ENCODE measurements at regions of chr12 and their contacts with region 1.

Region 1: GRCh38 chr12:116818948-116819832 is 62.1 kb downstream of the HRK start:
- DNase-seq: peak; percentile 92 to 95 (median 94)
- ATAC-seq: peak; percentile 94 to 98 (median 96)
- H3K4me3 ChIP-seq: peak overlapping the region; percentile 56 to 98 (median 76)
- H3K27ac ChIP-seq: peak overlapping the region; percentile 85 to 98 (median 92)
- H3K4me1 ChIP-seq: peaks cover 2 to 17% (median 11%) of the 10 kb centered on the region in 12 donors
- H3K27me3 ChIP-seq: no peaks in the 10 kb centered on the region
- CTCF ChIP-seq: peak in 2 of 12 donors; percentile 25 to 33
- POLR2A ChIP-seq: peak; percentile 18 to 78

Region 2: GRCh38 chr12:116737774-116738700 is 81.2 kb before region 1 on chr12 and contains the starts of genes RNFT2 and SPRING1:
- intact Hi-C with region 1: loop called in 5 of 10 experiments (anchors 1 to 5 kb)
- DNase-seq: peak; percentile 98 to 100 (median 99)
- ATAC-seq: peak; percentile 100
- H3K4me3 ChIP-seq: peak within 1 kb of the TSS; percentile 79 to 97 (median 88)
- H3K27ac ChIP-seq: peak within 1 kb of the TSS in 11 of 12 donors; percentile 54 to 87 (median 76)
- H3K4me1 ChIP-seq: peaks cover 3 to 18% (median 13%) of the 10 kb centered on the region in 12 donors
- H3K27me3 ChIP-seq: no peaks in the 10 kb centered on the region
- CTCF ChIP-seq: peak in 1 of 12 donors; percentile 19
- POLR2A ChIP-seq: peak; percentile 52 to 87
- total RNA-seq, gene RNFT2: 0.58 to 2.4 (median 1.7) TPM
- total RNA-seq, gene SPRING1: 8.2 to 24.4 (median 14.6) TPM

Region 3: DNA sequence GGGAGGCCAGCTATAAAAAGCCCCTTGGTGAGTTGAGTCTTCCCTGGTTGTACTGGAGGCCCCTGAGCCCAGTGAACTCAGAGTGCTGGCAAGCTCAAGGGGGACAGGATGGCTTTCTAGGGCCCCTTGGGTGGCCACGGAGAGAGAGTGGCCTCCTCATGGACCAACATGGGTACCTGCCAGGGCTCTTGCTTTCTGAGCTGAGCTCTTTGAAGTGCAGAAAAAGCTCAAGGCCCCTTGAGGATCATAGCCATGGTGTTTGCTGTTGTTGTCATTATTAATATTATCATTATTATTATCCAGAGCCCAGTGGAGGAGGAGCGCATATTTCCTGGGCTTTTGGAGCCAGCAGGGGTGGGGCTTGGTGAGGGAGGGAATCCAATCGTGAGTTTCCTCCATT is 74.4 kb before region 1 on chr12:
- intact Hi-C with region 1: loop called in 4 of 10 experiments (anchors 2 to 5 kb)
- DNase-seq: no peak
- ATAC-seq: no peak
- H3K4me3 ChIP-seq: no peak overlapping the region
- H3K27ac ChIP-seq: no peak overlapping the region
- H3K4me1 ChIP-seq: no peaks in the 10 kb centered on the region
- H3K27me3 ChIP-seq: no peaks in the 10 kb centered on the region
- CTCF ChIP-seq: no peak
- POLR2A ChIP-seq: no peak

Region 4: GRCh38 chr12:116765271-116765670 is 53.9 kb before region 1 on chr12:
- intact Hi-C with region 1: no loop called
- DNase-seq: no peak
- ATAC-seq: no peak
- H3K4me3 ChIP-seq: no peak overlapping the region
- H3K27ac ChIP-seq: no peak overlapping the region
- H3K4me1 ChIP-seq: peaks cover 0 to under 1% (median 0%) of the 10 kb centered on the region in 12 donors
- H3K27me3 ChIP-seq: no peaks in the 10 kb centered on the region
- CTCF ChIP-seq: no peak
- POLR2A ChIP-seq: no peak

Measured in heart left ventricle (tissue), 16 donors.